ENCODE measurements at regions of chr2 and their contacts with region 1.

Region 1: DNA sequence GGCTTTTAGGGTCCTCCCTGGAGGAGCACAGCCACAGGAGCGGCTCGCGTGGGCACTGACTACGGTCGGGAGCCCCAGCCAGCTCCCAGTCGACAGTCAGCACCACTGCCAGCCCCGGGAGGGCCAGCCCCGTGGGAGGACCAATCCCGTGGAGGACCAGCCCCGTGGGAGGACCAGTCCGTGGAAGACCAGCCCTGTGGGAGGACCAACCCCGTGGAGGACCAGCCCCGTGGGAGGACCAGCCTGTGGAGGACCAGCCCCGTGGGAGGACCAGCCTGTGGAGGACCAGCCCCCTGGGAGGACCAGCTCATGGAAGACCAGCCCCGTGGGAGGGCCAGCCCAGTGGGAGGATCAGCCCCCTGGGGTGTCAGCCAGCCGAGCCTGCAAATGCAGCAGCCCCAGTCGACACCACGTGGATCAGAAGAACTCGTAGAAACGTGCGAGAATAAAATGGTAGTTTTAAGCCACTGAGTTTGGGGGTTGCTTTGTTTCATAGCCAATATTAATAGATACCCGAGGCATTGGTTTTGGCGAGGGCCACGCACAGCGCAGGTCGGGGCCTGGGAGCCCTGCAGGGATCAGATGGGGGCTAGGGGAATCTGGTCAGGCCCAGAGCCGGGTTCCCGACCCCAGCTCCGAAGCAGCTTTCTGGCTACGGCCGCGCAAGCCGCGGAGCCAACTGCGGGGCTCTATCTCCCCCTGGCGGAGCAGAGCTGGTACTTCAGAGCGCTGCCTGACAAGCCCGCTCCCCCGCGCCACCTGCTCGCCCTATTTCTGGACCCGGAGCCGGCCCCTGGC is 73.0 kb downstream of the TEX51 start:
- DNase-seq: peak; percentile 74
- H3K4me3 Mint-ChIP-seq: peak overlapping the region; percentile 47
- H3K27ac Mint-ChIP-seq: no peak overlapping the region
- H3K4me1 Mint-ChIP-seq: peaks cover 2% of the 10 kb centered on the region
- H3K27me3 Mint-ChIP-seq: peaks cover 28% of the 10 kb centered on the region

Region 2: GRCh38 chr2:126244937-126245336 is 726.7 kb before region 1 on chr2:
- CTCF ChIA-PET with region 1: interaction called, 3 read pairs
- intact Hi-C with region 1: loop called (anchors 1 kb)
- DNase-seq: peak; percentile 81
- H3K4me3 Mint-ChIP-seq: no peak overlapping the region
- H3K27ac Mint-ChIP-seq: no peak overlapping the region
- H3K4me1 Mint-ChIP-seq: no peaks in the 10 kb centered on the region
- H3K27me3 Mint-ChIP-seq: peaks cover 8% of the 10 kb centered on the region

Region 3: GRCh38 chr2:126399001-126399400 is 572.7 kb before region 1 on chr2:
- CTCF ChIA-PET with region 1: no interaction called
- intact Hi-C with region 1: loop called (anchors 5 kb)
- DNase-seq: peak; percentile 47
- H3K4me3 Mint-ChIP-seq: no peak overlapping the region
- H3K27ac Mint-ChIP-seq: no peak overlapping the region
- H3K4me1 Mint-ChIP-seq: no peaks in the 10 kb centered on the region
- H3K27me3 Mint-ChIP-seq: peaks cover 9% of the 10 kb centered on the region

Region 4: GRCh38 chr2:126886211-126886915 is 85.3 kb before region 1 on chr2:
- CTCF ChIA-PET with region 1: interaction called, 13 read pairs
- intact Hi-C with region 1: loop called (anchors 2 kb)
- DNase-seq: peak; percentile 70
- H3K4me3 Mint-ChIP-seq: no peak overlapping the region
- H3K27ac Mint-ChIP-seq: no peak overlapping the region
- H3K4me1 Mint-ChIP-seq: peaks cover 2% of the 10 kb centered on the region
- H3K27me3 Mint-ChIP-seq: peaks cover 13% of the 10 kb centered on the region

Region 5: GRCh38 chr2:126898636-126899035 is 73.0 kb before region 1 on chr2 and contains the start of gene TEX51:
- CTCF ChIA-PET with region 1: no interaction called
- intact Hi-C with region 1: no loop called
- DNase-seq: no peak
- H3K4me3 Mint-ChIP-seq: no peak within 1 kb of the TSS
- H3K27ac Mint-ChIP-seq: no peak within 1 kb of the TSS
- H3K4me1 Mint-ChIP-seq: no peaks in the 10 kb centered on the region
- H3K27me3 Mint-ChIP-seq: peaks cover 5% of the 10 kb centered on the region
- total RNA-seq, gene TEX51: not detected

Region 6: DNA sequence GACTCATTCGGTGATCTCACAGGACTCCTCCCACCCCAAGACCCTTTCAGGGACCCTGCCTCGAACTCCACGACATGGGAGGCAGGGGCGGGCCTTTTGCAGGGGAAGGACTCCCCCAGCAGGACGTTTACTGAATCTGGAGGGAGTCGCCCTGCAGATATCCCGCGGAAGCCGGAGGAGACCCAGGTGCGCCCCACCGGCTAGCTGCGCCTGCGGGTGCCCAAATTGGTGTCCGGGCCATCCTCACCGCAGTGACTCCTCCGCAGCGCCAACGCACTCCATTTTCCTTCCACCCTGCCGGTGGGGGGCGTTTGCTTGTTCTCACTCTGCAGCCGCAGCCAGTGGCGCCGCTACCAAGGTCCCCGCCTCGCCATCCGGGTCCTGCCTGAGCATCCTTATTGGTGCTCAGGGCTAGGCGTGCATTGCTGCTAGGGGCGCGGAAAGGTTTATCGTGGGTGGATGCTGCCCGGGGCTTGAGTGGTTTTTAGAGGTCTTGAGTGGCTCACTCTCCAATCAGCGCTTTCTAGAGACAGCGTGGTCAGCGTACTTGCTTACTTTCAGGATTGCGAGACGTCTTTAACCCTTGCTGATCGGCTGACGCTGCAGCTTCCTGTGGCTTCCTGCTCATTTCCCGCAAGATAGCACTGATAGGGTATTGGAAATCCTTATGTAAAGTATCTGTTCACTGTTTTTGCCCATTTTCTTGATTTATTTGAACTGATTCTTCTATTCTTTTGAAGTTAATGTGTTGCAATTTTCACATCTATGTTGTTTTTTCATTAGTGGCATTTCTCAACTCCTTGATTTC is 53.9 kb after region 1 on chr2:
- CTCF ChIA-PET with region 1: interaction called, 4 read pairs
- intact Hi-C with region 1: loop called (anchors 5 kb)
- DNase-seq: peak; percentile 84
- H3K4me3 Mint-ChIP-seq: peak overlapping the region; percentile 72
- H3K27ac Mint-ChIP-seq: no peak overlapping the region
- H3K4me1 Mint-ChIP-seq: peaks cover 3% of the 10 kb centered on the region
- H3K27me3 Mint-ChIP-seq: no peaks in the 10 kb centered on the region

Region 7: DNA sequence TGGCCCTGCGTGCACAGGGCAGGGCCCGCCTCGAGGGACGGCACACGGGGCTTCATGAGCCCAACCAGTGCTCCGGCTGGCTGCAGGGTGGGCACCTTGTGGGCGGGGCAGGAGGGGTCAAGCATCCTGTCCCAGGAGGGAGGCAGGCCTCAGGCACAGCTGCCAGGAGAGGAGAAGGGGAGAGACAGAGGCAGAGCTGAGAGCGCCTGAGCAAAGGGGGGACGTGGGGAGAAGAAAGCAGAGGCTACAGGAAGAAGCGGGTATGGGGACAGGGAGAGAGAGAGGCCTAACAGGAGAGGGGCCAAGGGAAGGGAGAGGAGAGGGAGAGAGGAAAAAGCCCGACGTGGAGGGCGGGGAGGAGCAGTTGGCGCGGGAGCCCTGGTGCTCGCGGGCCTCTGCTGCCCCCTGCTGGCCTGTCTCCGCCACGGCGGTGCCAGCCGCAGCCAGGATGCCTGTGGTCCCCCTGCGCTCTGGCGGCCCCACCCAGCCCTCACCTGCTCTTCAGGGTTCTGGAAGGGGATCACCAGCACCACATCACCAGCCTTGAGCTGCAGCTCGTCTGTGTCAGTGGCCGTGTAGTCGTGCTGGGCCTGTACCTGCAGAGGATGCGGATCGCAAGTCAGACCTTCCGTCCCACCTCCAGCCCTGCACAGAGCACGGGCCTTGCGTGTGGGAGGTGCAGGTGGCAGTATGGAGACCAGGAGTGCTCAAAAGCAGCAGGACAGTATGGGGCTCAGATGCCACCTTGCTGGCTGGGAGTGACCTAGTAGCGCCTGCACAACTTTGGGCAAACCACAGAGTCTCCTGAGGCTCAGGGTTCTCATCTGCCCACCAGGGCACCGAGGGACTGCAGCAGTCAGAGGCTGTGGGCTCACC is 78.5 kb after region 1 on chr2:
- CTCF ChIA-PET with region 1: interaction called, 3 read pairs
- intact Hi-C with region 1: loop called (anchors 1 kb)
- DNase-seq: peak; percentile 67
- H3K4me3 Mint-ChIP-seq: no peak overlapping the region
- H3K27ac Mint-ChIP-seq: no peak overlapping the region
- H3K4me1 Mint-ChIP-seq: peaks cover 3% of the 10 kb centered on the region
- H3K27me3 Mint-ChIP-seq: no peaks in the 10 kb centered on the region

Region 8: GRCh38 chr2:128422571-128422970 is 1450.9 kb after region 1 on chr2:
- CTCF ChIA-PET with region 1: no interaction called
- intact Hi-C with region 1: no loop called
- DNase-seq: no peak
- H3K4me3 Mint-ChIP-seq: no peak overlapping the region
- H3K27ac Mint-ChIP-seq: no peak overlapping the region
- H3K4me1 Mint-ChIP-seq: no peaks in the 10 kb centered on the region
- H3K27me3 Mint-ChIP-seq: no peaks in the 10 kb centered on the region